CD8-positive, alpha-beta T cell (primary cell): ENCODE measurements at regions of chr3 and their contacts with region 1.

Region 1: GRCh38 chr3:48685602-48686511 is at the start of gene NCKIPSD:
- DNase-seq: peak; percentile 81 to 97 (median 91)
- ATAC-seq: peak; percentile 92
- H3K4me3 ChIP-seq: peak within 1 kb of the TSS; percentile 63 to 85
- H3K4me3 Mint-ChIP-seq: peak within 1 kb of the TSS; percentile 93
- H3K27ac ChIP-seq: peak within 1 kb of the TSS; percentile 58 to 82
- H3K27ac Mint-ChIP-seq: peak within 1 kb of the TSS; percentile 91
- H3K4me1 ChIP-seq: peaks cover 18% of the 10 kb centered on the region
- H3K4me1 Mint-ChIP-seq: peaks cover 22% of the 10 kb centered on the region
- H3K27me3 ChIP-seq: no peaks in the 10 kb centered on the region
- H3K27me3 Mint-ChIP-seq: no peaks in the 10 kb centered on the region
- CTCF ChIP-seq: peak; percentile 93
- total RNA-seq, gene NCKIPSD: 7.7 to 8.1 TPM

Region 2: GRCh38 chr3:48222616-48223513 is 463.0 kb before region 1 on chr3 and contains the start of gene CAMP:
- CTCF ChIA-PET with region 1: no interaction called
- POLR2A ChIA-PET with region 1: no interaction called
- intact Hi-C with region 1: no loop called
- DNase-seq: peak in 1 of 9 experiments; percentile 39
- ATAC-seq: no peak
- H3K4me3 ChIP-seq: no peak within 1 kb of the TSS
- H3K4me3 Mint-ChIP-seq: no peak within 1 kb of the TSS
- H3K27ac ChIP-seq: no peak within 1 kb of the TSS
- H3K27ac Mint-ChIP-seq: no peak within 1 kb of the TSS
- H3K4me1 ChIP-seq: peaks cover 10% of the 10 kb centered on the region
- H3K4me1 Mint-ChIP-seq: peaks cover 12% of the 10 kb centered on the region
- H3K27me3 ChIP-seq: no peaks in the 10 kb centered on the region
- H3K27me3 Mint-ChIP-seq: no peaks in the 10 kb centered on the region
- CTCF ChIP-seq: no peak
- total RNA-seq, gene CAMP: not detected

Region 3: GRCh38 chr3:48635222-48636021 is 50.4 kb before region 1 on chr3 and contains the start of gene SLC26A6:
- CTCF ChIA-PET with region 1: no interaction called
- POLR2A ChIA-PET with region 1: no interaction called
- intact Hi-C with region 1: loop called (anchors 1 kb)
- DNase-seq: peak; percentile 79 to 96 (median 93)
- ATAC-seq: peak; percentile 98
- H3K4me3 ChIP-seq: peak within 1 kb of the TSS; percentile 78 to 93
- H3K4me3 Mint-ChIP-seq: peak within 1 kb of the TSS; percentile 87
- H3K27ac ChIP-seq: peak within 1 kb of the TSS; percentile 34 to 64
- H3K27ac Mint-ChIP-seq: no peak within 1 kb of the TSS
- H3K4me1 ChIP-seq: peaks cover 17% of the 10 kb centered on the region
- H3K4me1 Mint-ChIP-seq: peaks cover 17% of the 10 kb centered on the region
- H3K27me3 ChIP-seq: no peaks in the 10 kb centered on the region
- H3K27me3 Mint-ChIP-seq: no peaks in the 10 kb centered on the region
- CTCF ChIP-seq: no peak
- total RNA-seq, gene SLC26A6: 10.9 to 13.5 TPM

Region 4: DNA sequence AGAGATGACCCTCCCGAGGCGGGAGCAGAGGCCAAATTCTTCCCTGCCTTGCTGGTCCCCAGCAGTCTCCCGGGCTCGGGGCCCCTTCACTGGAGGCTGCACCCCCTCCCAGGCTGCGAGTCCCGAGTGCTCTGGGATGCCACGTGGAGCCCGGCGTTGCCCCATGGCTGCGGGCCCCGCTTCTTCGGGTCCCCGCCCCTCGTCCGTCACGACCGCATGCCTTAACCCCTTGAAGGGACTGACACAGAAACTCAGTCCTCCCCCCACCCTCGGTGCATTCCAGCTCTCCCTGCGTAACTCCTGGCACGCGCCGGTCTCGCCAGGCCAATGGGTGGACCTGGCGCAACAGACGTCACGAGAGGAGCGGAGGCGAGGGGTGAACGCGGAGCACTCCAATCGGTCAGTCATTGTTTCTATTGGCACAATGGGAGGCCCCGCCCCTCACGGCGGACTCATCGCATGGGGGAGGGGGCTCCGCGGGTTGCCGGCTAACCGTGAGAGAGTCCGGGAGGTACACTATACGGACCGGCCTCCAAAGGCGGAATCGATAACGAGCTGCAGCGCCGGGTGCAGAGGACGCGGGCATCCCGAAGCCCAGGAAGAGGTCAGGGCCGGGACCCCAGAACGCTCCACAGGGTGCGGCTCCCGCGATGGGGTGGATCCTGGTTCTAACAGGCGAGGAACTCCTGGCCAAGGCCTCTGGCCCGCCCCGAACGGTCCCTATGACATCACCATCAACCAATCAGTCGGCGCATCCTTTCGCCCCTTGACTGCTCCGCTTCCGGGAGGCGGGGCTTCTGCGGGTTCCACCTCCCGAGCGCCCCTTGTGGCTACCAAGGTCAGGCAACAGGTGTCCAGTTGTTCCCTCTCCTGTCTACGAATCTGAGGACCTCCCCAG is 22.2 kb before region 1 on chr3:
- CTCF ChIA-PET with region 1: interaction called, 4 read pairs
- POLR2A ChIA-PET with region 1: no interaction called
- intact Hi-C with region 1: loop called in 1 of 2 experiments (anchors 1 kb)
- DNase-seq: peak; percentile 70 to 93 (median 79)
- ATAC-seq: peak; percentile 78
- H3K4me3 ChIP-seq: peak overlapping the region; percentile 61 to 65
- H3K4me3 Mint-ChIP-seq: peak overlapping the region; percentile 75
- H3K27ac ChIP-seq: peak overlapping the region in 1 of 2 experiments; percentile 30
- H3K27ac Mint-ChIP-seq: no peak overlapping the region
- H3K4me1 ChIP-seq: peaks cover 30% of the 10 kb centered on the region
- H3K4me1 Mint-ChIP-seq: peaks cover 9% of the 10 kb centered on the region
- H3K27me3 ChIP-seq: peaks cover 14 to 21% of the 10 kb centered on the region in 2 experiments
- H3K27me3 Mint-ChIP-seq: peaks cover 23% of the 10 kb centered on the region
- CTCF ChIP-seq: peak; percentile 56

Region 5: GRCh38 chr3:48847504-48848423 is 161.9 kb after region 1 on chr3 and contains the start of gene PRKAR2A:
- CTCF ChIA-PET with region 1: interaction called, 4 read pairs
- POLR2A ChIA-PET with region 1: no interaction called
- intact Hi-C with region 1: loop called (anchors 1 to 5 kb)
- DNase-seq: peak; percentile 67 to 93 (median 83)
- ATAC-seq: peak; percentile 75
- H3K4me3 ChIP-seq: peak within 1 kb of the TSS; percentile 68 to 72
- H3K4me3 Mint-ChIP-seq: peak within 1 kb of the TSS; percentile 86
- H3K27ac ChIP-seq: peak within 1 kb of the TSS; percentile 40 to 90
- H3K27ac Mint-ChIP-seq: peak within 1 kb of the TSS; percentile 97
- H3K4me1 ChIP-seq: peaks cover 26% of the 10 kb centered on the region
- H3K4me1 Mint-ChIP-seq: peaks cover 31% of the 10 kb centered on the region
- H3K27me3 ChIP-seq: no peaks in the 10 kb centered on the region
- H3K27me3 Mint-ChIP-seq: no peaks in the 10 kb centered on the region
- CTCF ChIP-seq: no peak
- total RNA-seq, gene PRKAR2A: 75.2 to 75.6 TPM

Region 6: GRCh38 chr3:49553692-49554632 is 868.1 kb after region 1 on chr3 and contains the start of gene BSN:
- CTCF ChIA-PET with region 1: no interaction called
- POLR2A ChIA-PET with region 1: no interaction called
- intact Hi-C with region 1: loop called in 1 of 2 experiments (anchors 10 kb)
- DNase-seq: peak; percentile 72 to 95 (median 93)
- ATAC-seq: peak; percentile 90
- H3K4me3 ChIP-seq: peak within 1 kb of the TSS; percentile 65 to 97
- H3K4me3 Mint-ChIP-seq: peak within 1 kb of the TSS; percentile 89
- H3K27ac ChIP-seq: peak within 1 kb of the TSS in 1 of 2 experiments; percentile 38
- H3K27ac Mint-ChIP-seq: peak within 1 kb of the TSS; percentile 64
- H3K4me1 ChIP-seq: peaks cover 13% of the 10 kb centered on the region
- H3K4me1 Mint-ChIP-seq: peaks cover 17% of the 10 kb centered on the region
- H3K27me3 ChIP-seq: peaks cover 0 to 2% of the 10 kb centered on the region in 2 experiments
- H3K27me3 Mint-ChIP-seq: peaks cover 21% of the 10 kb centered on the region
- CTCF ChIP-seq: no peak
- total RNA-seq, gene BSN: 0.17 to 0.35 TPM